Tibial artery (tissue), 4 donors: ENCODE measurements at regions of chr22 and their contacts with region 1.

Region 1: DNA sequence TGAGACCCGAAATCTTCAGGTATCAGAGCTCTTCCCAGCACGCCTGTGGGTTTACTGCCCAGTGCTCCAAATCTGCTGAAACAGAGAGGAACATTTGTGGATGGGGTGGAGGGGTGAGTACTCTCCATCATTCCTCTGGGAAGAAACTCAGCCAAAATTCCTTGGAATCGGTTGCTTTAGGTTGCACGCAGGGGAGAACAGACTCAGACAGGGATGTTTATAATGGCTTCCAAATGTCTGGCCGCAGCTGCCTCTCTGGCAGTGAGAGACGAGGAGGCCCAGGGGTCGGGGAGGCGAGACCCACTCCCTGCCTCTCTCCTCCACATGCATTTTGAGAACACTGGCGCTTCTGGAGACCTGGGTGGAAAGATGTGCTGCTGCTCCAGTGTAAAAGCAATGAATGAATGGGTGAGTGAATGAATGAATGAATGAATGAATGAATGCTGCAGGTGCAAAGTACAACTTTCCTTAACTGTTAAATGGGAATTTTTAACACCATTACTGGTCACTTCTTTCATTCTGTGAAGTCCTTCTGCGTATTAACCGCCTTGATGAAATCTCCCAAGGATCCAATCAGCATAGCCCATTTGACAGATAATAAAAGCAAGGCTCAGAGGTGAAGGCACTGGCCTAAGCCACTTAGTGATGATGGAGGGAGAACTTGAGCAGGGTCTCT is 437.4 kb downstream of the MIAT start:
- DNase-seq: no peak
- H3K4me3 ChIP-seq: no peak overlapping the region
- H3K27ac ChIP-seq: no peak overlapping the region
- H3K4me1 ChIP-seq: peaks cover 0 to 16% (median 3%) of the 10 kb centered on the region in 4 donors
- H3K27me3 ChIP-seq: no peaks in the 10 kb centered on the region
- CTCF ChIP-seq: no peak

Region 2: DNA sequence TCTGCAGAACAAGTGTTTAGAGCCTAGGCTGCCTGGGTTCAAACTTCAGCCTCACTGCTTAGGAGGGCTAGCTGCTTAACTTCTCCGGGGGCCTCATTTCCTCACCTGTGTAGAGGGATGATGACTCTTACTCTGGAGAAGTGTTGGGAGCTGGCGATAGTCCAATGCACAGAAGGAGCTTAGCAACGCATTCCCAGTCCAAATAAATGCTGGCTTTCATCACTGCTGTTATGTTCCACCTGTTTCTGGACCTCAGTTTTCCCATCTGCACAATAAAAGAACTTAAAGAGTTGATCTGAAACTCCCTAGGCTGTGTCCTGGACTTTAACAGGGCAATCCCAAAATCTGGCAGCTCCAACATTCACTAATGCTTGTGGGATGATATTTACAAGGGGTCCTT is 99.5 kb before region 1 on chr22:
- intact Hi-C with region 1: no loop called
- DNase-seq: no peak
- H3K4me3 ChIP-seq: no peak overlapping the region
- H3K27ac ChIP-seq: no peak overlapping the region
- H3K4me1 ChIP-seq: no peaks in the 10 kb centered on the region
- H3K27me3 ChIP-seq: no peaks in the 10 kb centered on the region
- CTCF ChIP-seq: no peak

Region 3: GRCh38 chr22:27057717-27058116 is 37.1 kb before region 1 on chr22:
- intact Hi-C with region 1: loop called (anchors 2 kb)
- DNase-seq: no peak
- H3K4me3 ChIP-seq: no peak overlapping the region
- H3K27ac ChIP-seq: no peak overlapping the region
- H3K4me1 ChIP-seq: no peaks in the 10 kb centered on the region
- H3K27me3 ChIP-seq: no peaks in the 10 kb centered on the region
- CTCF ChIP-seq: no peak

Region 4: DNA sequence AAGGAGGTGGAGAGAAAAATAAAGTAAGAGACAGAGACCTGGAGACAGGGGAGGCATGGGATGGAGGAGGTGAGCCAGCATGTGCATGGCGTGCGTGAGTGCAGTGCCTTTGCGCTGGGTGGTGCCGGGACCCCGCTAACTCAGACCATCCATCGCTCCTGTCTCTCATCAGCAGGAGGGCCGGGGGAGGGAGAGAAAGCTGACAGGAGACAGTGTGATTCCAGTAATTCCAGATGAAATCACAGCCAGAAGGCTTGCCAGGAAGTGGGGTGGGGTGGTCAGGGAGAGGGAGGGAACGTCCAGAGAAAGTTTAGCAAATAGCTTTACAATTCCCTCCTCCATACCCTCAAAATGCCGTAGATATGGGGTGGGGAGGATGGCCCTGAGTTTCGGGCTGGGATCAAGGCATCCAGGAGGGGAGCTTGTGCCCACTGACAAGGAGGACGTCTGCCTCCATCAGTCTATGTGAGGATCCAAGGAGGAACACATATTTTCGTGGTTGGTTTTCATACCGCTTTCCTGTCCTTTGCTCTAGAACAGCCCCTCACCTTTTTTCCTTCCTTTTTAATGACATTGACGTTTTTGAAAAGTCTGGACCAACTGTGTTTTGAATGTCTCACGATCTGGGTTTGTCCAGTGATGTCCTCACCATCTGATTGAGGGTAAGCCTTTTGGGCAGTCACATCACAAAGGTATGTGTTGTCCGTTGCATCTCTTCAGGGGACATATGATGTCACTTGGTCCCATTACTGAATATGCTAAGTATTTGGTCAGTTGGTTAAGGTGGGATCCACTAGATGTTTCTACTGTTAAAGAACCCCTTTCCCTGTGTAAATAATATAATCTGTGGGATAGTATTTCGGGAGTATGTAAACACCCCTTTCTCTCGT is 130.0 kb after region 1 on chr22:
- intact Hi-C with region 1: no loop called
- DNase-seq: no peak
- H3K4me3 ChIP-seq: no peak overlapping the region
- H3K27ac ChIP-seq: no peak overlapping the region
- H3K4me1 ChIP-seq: peaks cover 0 to 12% (median 1%) of the 10 kb centered on the region in 4 donors
- H3K27me3 ChIP-seq: no peaks in the 10 kb centered on the region
- CTCF ChIP-seq: no peak